Tibial artery (tissue), 4 donors: ENCODE measurements at regions of chr1 and their contacts with region 1.

Region 1: DNA sequence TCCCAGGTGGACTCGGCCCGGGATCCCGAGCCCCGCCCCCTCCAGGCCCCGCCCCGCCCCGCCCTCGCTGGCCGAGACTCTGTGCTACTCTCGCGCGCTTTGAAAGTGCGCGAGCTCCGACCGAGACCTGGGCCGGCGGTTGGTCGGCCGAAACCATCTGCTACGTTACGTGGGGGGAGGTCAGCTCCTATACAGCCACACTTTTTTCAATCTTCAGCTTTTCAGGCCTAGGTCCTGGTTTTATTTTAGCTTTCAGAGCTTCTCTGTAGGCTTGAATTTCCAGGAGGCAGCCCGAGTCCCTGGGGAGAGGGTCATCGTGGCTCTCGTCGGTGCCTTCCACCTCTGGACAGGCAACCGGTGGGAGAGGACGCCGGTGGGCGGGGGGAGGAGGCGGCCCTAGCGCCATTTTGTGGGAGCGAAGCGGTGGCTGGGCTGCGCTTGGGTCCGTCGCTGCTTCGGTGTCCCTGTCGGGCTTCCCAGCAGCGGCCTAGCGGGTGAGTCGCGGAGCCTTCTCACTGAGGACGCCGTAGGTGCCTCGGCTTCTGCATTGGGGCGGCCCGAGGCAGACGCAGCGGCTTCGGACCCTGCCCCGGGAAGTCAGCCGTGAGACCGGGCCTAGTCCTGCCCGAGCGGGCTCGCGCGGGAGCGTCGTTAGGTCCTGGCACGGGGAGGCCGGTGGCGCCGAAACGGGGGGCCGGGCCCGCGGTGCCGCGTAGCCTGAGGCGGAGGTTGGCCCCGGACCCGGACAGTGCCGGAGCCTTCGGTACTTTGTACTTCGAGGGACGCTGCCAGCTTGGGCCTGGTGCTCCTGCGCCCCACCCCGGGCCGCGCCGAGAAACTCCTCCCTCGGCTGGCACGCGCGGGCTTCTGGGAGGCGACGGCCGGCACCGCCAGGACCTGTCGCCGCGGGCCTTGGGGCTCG is at the start of gene TARDBP:
- DNase-seq: peak; percentile 78 to 92
- H3K4me3 ChIP-seq: peak within 1 kb of the TSS; percentile 77 to 97
- H3K27ac ChIP-seq: peak within 1 kb of the TSS; percentile 87 to 96
- H3K4me1 ChIP-seq: peaks cover 0 to 40% (median 31%) of the 10 kb centered on the region in 4 donors
- H3K27me3 ChIP-seq: no peaks in the 10 kb centered on the region
- CTCF ChIP-seq: peak in 1 of 2 experiments; percentile 5

Region 2: DNA sequence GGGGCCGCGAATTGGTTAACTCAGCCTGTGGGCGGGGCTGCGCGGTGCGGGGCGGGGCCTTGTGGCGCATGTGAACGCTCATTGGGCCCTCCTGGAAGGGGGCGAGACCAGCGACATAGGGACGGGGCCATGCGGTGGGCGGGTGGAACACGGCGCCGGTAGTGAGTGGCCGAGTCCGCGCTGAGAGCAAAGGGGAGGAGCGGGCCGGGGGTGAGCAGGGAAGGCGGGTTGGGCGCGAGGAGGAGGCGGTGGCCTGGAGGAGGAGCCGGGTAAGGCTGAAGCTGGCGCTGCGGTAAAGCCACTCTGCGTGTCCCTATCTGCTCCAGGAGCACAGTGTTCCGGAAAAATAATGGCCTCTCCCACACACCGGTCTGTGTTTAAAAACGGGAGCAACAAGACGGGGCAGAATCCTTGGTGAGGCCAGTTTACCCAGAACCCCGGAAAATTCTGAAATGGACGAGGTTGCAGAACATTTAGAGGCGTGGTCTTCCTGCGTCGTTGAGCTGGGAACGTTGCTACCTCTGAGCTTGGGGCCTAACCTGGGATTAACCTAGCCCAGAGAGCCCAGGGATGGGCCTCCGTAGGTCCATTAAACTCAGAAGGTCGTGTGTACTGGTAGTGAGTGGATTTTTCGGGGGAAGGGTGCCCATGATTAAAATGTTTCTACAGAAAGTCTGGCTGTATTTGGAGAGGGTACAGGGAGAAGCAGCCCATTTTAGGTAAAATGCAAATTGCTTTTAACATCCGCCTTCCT is 1101.9 kb before region 1 on chr1:
- intact Hi-C with region 1: loop called (anchors 5 kb)
- DNase-seq: peak; percentile 100
- H3K4me3 ChIP-seq: peak overlapping the region; percentile 72
- H3K27ac ChIP-seq: peak overlapping the region; percentile 96 to 99
- H3K4me1 ChIP-seq: peaks cover 4 to 29% (median 16%) of the 10 kb centered on the region in 4 donors
- H3K27me3 ChIP-seq: no peaks in the 10 kb centered on the region
- CTCF ChIP-seq: no peak

Region 3: DNA sequence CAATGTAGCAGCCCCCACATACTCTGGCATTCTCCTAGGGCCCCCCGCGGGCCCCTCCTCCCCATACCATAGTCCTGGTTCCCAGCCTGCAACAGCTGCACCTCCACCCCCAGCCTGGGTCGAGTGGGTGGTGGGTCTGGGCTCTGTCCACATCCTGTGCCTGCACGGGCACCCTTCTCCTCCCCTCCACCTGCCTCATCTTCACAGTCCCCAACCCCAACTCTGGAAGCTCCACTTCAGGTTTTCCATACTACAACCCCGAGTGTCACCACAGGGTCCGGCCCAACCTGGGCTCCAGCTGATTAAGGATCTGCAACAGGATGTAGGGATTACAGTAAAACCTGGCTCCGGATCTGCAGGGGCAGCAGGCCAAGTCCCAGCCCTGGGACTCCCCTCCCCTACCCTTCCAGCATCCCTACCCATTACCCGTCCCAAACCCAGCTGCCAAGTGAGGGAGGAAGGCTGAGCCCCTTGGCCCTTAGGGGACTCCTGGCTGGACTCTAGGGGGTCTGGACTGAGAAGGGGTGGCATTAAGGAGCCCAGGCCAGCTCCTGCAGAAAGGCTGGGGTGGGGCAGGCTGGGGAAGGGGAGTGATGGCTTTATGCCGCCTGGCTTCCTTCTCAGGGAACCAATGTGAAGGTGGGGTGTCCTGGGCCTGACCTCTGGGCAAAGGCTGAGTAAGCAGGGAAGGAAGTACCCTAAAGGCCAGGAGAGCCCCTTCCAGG is 332.9 kb before region 1 on chr1:
- intact Hi-C with region 1: no loop called
- DNase-seq: no peak
- H3K4me3 ChIP-seq: no peak overlapping the region
- H3K27ac ChIP-seq: no peak overlapping the region
- H3K4me1 ChIP-seq: peaks cover 0 to 97% (median 64%) of the 10 kb centered on the region in 4 donors
- H3K27me3 ChIP-seq: no peaks in the 10 kb centered on the region
- CTCF ChIP-seq: no peak

Region 4: GRCh38 chr1:10862743-10863335 is 149.7 kb before region 1 on chr1:
- intact Hi-C with region 1: no loop called
- DNase-seq: no peak
- H3K4me3 ChIP-seq: no peak overlapping the region
- H3K27ac ChIP-seq: no peak overlapping the region
- H3K4me1 ChIP-seq: peaks cover 0 to 48% (median 28%) of the 10 kb centered on the region in 4 donors
- H3K27me3 ChIP-seq: peaks cover 0 to 22% of the 10 kb centered on the region in 2 donors
- CTCF ChIP-seq: no peak

Region 5: DNA sequence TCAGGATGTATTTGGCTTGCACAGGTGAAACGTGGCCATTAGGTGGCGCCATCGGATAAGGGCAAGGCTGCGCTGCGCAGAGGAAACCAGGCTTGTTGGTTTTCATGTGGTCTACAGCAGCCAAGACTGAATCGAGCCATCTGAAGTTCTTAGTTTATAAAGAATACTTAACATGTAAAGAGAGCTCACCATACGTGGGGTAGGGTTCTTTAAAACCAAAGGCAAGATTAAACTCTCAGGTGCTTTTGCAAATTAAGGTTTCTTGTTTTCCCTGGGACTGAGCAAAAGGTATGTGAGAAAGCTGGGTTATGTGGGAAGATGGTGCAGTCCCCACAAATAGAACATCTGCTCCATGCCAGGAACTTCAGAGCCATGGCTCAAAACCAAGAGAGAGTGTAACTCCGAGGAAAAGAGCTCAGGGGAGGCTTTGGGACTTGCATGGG is 25.2 kb after region 1 on chr1:
- intact Hi-C with region 1: no loop called
- DNase-seq: peak; percentile 90 to 91
- H3K4me3 ChIP-seq: no peak overlapping the region
- H3K27ac ChIP-seq: no peak overlapping the region
- H3K4me1 ChIP-seq: peaks cover 0 to 8% (median 6%) of the 10 kb centered on the region in 4 donors
- H3K27me3 ChIP-seq: no peaks in the 10 kb centered on the region
- CTCF ChIP-seq: peak; percentile 97

Region 6: GRCh38 chr1:11611638-11612327 is 599.3 kb after region 1 on chr1:
- intact Hi-C with region 1: no loop called
- DNase-seq: no peak
- H3K4me3 ChIP-seq: no peak overlapping the region
- H3K27ac ChIP-seq: no peak overlapping the region
- H3K4me1 ChIP-seq: no peaks in the 10 kb centered on the region
- H3K27me3 ChIP-seq: peaks cover 0 to 36% of the 10 kb centered on the region in 2 donors
- CTCF ChIP-seq: no peak

Region 7: GRCh38 chr1:12095452-12096263 is 1083.1 kb after region 1 on chr1:
- intact Hi-C with region 1: loop called (anchors 5 kb)
- DNase-seq: no peak
- H3K4me3 ChIP-seq: no peak overlapping the region
- H3K27ac ChIP-seq: no peak overlapping the region
- H3K4me1 ChIP-seq: no peaks in the 10 kb centered on the region
- H3K27me3 ChIP-seq: no peaks in the 10 kb centered on the region
- CTCF ChIP-seq: no peak